ENCODE measurements at regions of chr10 and their contacts with region 1.

Region 1: GRCh38 chr10:133308421-133309110 is at the starts of genes TUBGCP2 and ZNF511:
- DNase-seq: peak; percentile 88
- ATAC-seq: peak; percentile 72
- H3K4me3 Mint-ChIP-seq: peak within 1 kb of the TSS; percentile 95
- H3K27ac Mint-ChIP-seq: peak within 1 kb of the TSS; percentile 98
- H3K4me1 Mint-ChIP-seq: peaks cover 29% of the 10 kb centered on the region
- H3K27me3 Mint-ChIP-seq: no peaks in the 10 kb centered on the region
- CTCF ChIP-seq: no peak
- total RNA-seq, gene TUBGCP2: 54.1 to 57.5 TPM
- total RNA-seq, gene ZNF511: 58.0 to 60.1 TPM

Region 2: GRCh38 chr10:133117688-133118071 is 190.9 kb before region 1 on chr10:
- CTCF ChIA-PET with region 1: no interaction called
- POLR2A ChIA-PET with region 1: no interaction called
- intact Hi-C with region 1: no loop called
- DNase-seq: no peak
- ATAC-seq: no peak
- H3K4me3 Mint-ChIP-seq: no peak overlapping the region
- H3K27ac Mint-ChIP-seq: no peak overlapping the region
- H3K4me1 Mint-ChIP-seq: no peaks in the 10 kb centered on the region
- H3K27me3 Mint-ChIP-seq: peaks cover under 1% of the 10 kb centered on the region
- CTCF ChIP-seq: no peak

Region 3: GRCh38 chr10:133278577-133279265 is 29.8 kb before region 1 on chr10:
- CTCF ChIA-PET with region 1: interaction called, 13 read pairs
- POLR2A ChIA-PET with region 1: interaction called, 8 read pairs
- intact Hi-C with region 1: no loop called
- DNase-seq: peak; percentile 80
- ATAC-seq: peak; percentile 20
- H3K4me3 Mint-ChIP-seq: peak overlapping the region; percentile 57
- H3K27ac Mint-ChIP-seq: peak overlapping the region; percentile 71
- H3K4me1 Mint-ChIP-seq: peaks cover 26% of the 10 kb centered on the region
- H3K27me3 Mint-ChIP-seq: no peaks in the 10 kb centered on the region
- CTCF ChIP-seq: no peak

Region 4: GRCh38 chr10:133292919-133293809 is 15.4 kb before region 1 on chr10:
- CTCF ChIA-PET with region 1: interaction called, 11 read pairs
- POLR2A ChIA-PET with region 1: interaction called, 4 read pairs
- intact Hi-C with region 1: no loop called
- DNase-seq: peak; percentile 29
- ATAC-seq: peak; percentile 55
- H3K4me3 Mint-ChIP-seq: no peak overlapping the region
- H3K27ac Mint-ChIP-seq: no peak overlapping the region
- H3K4me1 Mint-ChIP-seq: peaks cover 5% of the 10 kb centered on the region
- H3K27me3 Mint-ChIP-seq: no peaks in the 10 kb centered on the region
- CTCF ChIP-seq: no peak

Measured in activated CD8-positive, alpha-beta T cell treated with anti-CD3 and anti-CD28 coated beads for 36 hours (primary cell).